Caco-2 (cell line): ENCODE measurements at regions of chr9 and their contacts with region 1.

Region 1: DNA sequence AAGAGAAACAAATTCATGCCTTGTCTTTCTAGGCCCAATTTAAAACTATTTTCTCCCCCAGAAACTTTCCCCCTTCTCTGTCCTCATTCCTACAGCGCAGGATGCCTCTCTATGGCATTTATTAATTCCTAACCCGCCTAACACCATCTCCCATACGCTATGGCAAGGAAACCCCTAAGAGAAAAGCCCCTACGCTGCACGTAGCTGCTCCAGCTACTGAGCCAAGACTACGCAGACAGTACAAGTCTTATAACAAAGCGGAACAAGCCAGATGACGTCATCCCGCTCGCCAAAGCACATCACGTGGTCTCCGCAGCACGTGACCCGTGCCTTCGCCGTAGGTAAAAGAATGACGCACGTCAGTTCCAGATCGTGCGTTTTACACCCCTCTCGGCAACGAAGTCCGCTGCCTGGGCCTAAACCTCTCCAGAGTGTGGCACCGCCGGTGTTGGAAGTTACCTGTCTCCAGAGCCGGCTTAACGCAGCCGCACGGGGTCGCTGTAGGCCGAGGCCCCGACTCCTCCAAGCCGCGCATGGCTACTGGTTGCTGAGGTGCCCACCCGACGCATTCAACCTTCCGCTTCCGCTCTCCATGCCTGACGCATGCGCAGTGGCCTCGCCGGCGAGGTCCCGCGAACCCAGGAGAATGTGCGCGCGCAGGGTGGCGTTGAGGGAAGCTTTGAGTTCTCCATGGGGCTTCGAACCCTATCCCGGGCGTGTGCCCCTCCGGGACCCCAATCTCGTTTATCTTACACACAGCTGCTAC is at the start of gene TRMO:
- DNase-seq: peak; percentile 97
- H3K4me3 ChIP-seq: peak within 1 kb of the TSS; percentile 49
- H3K4me3 Mint-ChIP-seq: peak within 1 kb of the TSS; percentile 85
- H3K27ac Mint-ChIP-seq: peak within 1 kb of the TSS; percentile 96
- H3K4me1 ChIP-seq: no peaks in the 10 kb centered on the region; the same call in 1 of the 2 replicates
- H3K4me1 Mint-ChIP-seq: peaks cover 17% of the 10 kb centered on the region
- H3K27me3 ChIP-seq: no peaks in the 10 kb centered on the region
- H3K27me3 Mint-ChIP-seq: peaks cover 2% of the 10 kb centered on the region
- CTCF ChIP-seq: peak; percentile 67 to 84
- total RNA-seq, gene TRMO: 10.0 and 15.2 TPM in 2 replicates

Region 2: DNA sequence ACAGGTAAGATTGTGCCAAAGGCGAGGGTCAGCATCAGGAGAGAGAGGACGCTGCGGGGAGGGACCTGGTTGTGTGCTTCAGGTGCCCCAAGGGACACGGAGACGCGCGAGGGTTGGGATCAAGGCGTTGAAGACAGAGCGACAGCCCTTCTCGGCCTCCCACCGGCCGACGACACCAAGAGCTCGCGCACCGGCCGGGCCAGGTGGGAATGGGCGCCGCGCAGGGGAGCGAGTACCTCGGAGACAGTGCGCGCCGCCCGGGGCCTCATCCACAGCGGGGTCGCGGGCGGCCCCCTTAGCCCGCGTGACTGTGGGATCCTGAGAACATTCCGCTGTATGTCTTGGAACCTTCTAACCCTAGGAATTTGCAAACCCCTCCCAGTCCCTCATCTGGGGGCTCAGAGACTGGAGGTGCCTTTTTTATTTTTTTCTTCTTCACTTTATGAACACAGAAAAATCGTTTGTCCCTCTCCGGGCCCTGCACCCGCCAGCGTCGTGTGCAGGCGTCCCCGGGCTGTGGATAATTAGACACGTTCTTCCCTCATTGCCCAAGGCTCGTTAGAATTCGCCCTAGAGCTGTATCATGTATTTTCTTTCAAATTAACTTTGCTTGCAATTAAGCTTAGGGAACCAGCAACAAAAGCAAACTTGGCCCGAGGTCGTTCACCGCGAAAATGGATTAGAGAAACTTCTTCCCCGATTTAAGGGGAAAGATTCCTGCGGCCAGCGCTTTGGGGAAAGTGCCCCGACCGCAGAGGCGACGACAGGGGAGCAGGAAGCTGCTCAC is 64.3 kb before region 1 on chr9:
- CTCF ChIA-PET with region 1: no interaction called
- POLR2A ChIA-PET with region 1: no interaction called
- intact Hi-C with region 1: no loop called
- DNase-seq: no peak
- H3K4me3 ChIP-seq: no peak overlapping the region
- H3K4me3 Mint-ChIP-seq: no peak overlapping the region
- H3K27ac Mint-ChIP-seq: no peak overlapping the region
- H3K4me1 ChIP-seq: no peaks in the 10 kb centered on the region
- H3K4me1 Mint-ChIP-seq: no peaks in the 10 kb centered on the region
- H3K27me3 ChIP-seq: no peaks in the 10 kb centered on the region
- H3K27me3 Mint-ChIP-seq: no peaks in the 10 kb centered on the region
- CTCF ChIP-seq: no peak

Region 3: GRCh38 chr9:97954550-97954989 is 32.4 kb after region 1 on chr9:
- CTCF ChIA-PET with region 1: interaction called, 6 read pairs
- POLR2A ChIA-PET with region 1: no interaction called
- intact Hi-C with region 1: loop called (anchors 1 kb)
- DNase-seq: peak; percentile 70 to 77
- H3K4me3 ChIP-seq: no peak overlapping the region
- H3K4me3 Mint-ChIP-seq: no peak overlapping the region
- H3K27ac Mint-ChIP-seq: no peak overlapping the region
- H3K4me1 ChIP-seq: no peaks in the 10 kb centered on the region
- H3K4me1 Mint-ChIP-seq: no peaks in the 10 kb centered on the region
- H3K27me3 ChIP-seq: no peaks in the 10 kb centered on the region
- H3K27me3 Mint-ChIP-seq: peaks cover 6% of the 10 kb centered on the region
- CTCF ChIP-seq: peak; percentile 74 to 76

Region 4: DNA sequence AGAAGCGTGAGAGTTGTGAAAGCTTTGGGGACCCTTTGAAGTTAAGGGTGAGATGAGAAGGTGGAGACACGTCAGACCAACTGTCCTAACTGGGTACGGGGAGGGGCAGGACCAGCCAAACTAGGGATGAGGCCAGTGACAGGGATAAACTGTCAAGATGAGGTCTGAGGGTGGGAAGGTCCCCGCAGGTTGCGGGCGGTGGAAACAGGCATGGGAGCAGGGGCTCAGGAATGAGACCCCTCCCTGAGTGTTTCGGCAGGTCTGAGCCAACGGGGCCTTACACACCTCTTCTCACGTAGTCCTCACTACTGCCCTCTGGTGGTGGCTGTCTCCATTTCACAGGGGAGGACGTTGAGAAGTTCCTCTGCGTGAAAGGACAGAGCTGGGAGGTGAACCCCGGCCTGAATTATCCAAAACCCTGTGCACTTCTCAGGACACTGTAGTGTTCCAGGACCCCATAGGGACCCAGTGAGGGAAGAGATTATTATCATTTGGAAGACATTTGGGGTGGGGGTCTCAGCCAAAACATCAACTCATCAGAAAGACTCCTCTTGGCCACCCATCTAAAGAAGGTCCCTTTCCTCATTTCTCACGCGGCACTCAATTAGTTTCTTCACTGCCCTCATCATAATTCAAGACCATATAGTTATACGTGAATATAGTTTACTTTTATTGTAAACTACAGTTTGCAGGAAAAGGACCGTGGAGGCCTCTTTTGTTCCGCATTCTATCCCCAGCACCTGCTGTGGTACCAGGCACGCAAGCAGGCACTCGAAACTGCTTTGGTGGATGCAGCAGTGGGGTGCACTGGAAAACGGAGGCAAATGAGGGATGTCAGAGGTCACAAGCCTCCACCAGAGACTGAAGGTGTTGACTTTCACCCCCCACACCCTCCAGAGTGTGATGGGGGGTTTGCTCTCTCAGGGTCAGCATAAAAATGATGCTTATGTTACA is 112.7 kb after region 1 on chr9:
- CTCF ChIA-PET with region 1: interaction called, 16 read pairs
- POLR2A ChIA-PET with region 1: no interaction called
- intact Hi-C with region 1: loop called (anchors 1 kb)
- DNase-seq: peak; percentile 81 to 83
- H3K4me3 ChIP-seq: no peak overlapping the region
- H3K4me3 Mint-ChIP-seq: no peak overlapping the region
- H3K27ac Mint-ChIP-seq: no peak overlapping the region
- H3K4me1 ChIP-seq: no peaks in the 10 kb centered on the region
- H3K4me1 Mint-ChIP-seq: no peaks in the 10 kb centered on the region
- H3K27me3 ChIP-seq: no peaks in the 10 kb centered on the region
- H3K27me3 Mint-ChIP-seq: peaks cover 2% of the 10 kb centered on the region
- CTCF ChIP-seq: peak; percentile 68 to 72

Region 5: GRCh38 chr9:98192503-98193335 is 270.6 kb after region 1 on chr9 and contains the start of gene CORO2A:
- CTCF ChIA-PET with region 1: no interaction called
- POLR2A ChIA-PET with region 1: interaction called, 10 read pairs
- intact Hi-C with region 1: no loop called
- DNase-seq: peak; percentile 88 to 93
- H3K4me3 ChIP-seq: peak within 1 kb of the TSS; percentile 69
- H3K4me3 Mint-ChIP-seq: peak within 1 kb of the TSS; percentile 81
- H3K27ac Mint-ChIP-seq: peak within 1 kb of the TSS; percentile 67
- H3K4me1 ChIP-seq: peaks cover 25% of the 10 kb centered on the region
- H3K4me1 Mint-ChIP-seq: peaks cover 28% of the 10 kb centered on the region
- H3K27me3 ChIP-seq: no peaks in the 10 kb centered on the region
- H3K27me3 Mint-ChIP-seq: no peaks in the 10 kb centered on the region
- CTCF ChIP-seq: peak; percentile 10 to 76
- total RNA-seq, gene CORO2A: 18.9 and 20.0 TPM in 2 replicates

Region 6: DNA sequence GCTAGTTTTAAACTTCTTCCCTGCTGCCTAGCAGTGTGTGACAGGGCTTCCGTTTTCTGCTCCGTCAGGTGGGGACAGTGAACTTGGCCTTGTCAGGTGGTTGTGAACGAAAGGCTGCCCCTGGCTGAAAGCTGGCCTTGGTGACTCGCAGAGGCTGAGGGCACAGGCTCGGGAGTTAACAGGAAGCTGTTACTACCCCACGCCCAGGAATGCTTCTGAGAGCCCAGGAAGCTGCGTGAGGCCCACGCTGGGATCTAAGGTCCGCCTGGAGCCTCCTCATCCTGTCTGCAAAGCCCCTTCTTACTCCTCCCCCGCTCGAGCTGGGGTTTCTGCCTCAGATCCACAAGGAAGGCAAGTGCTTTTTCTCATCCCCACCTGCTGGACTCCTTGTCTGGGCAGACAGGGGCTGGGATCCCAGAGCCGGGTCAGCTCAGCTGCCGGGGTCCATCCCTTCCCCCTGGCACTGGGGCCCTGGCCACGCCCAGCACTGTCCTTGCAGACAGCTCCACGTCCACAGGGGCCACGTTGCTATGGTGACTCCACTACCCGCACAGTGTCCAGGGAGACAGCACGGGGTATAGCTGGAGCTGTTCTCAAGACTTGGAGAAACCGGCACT is 458.0 kb after region 1 on chr9:
- CTCF ChIA-PET with region 1: no interaction called
- POLR2A ChIA-PET with region 1: no interaction called
- intact Hi-C with region 1: no loop called
- DNase-seq: peak; percentile 14 to 65
- H3K4me3 ChIP-seq: no peak overlapping the region
- H3K4me3 Mint-ChIP-seq: no peak overlapping the region
- H3K27ac Mint-ChIP-seq: no peak overlapping the region
- H3K4me1 ChIP-seq: peaks cover 21% of the 10 kb centered on the region
- H3K4me1 Mint-ChIP-seq: peaks cover 3% of the 10 kb centered on the region
- H3K27me3 ChIP-seq: no peaks in the 10 kb centered on the region
- H3K27me3 Mint-ChIP-seq: no peaks in the 10 kb centered on the region
- CTCF ChIP-seq: no peak